Cardiac septum (tissue), 1 donor: ENCODE measurements at regions of chr7 and their contacts with region 1.

Region 1: DNA sequence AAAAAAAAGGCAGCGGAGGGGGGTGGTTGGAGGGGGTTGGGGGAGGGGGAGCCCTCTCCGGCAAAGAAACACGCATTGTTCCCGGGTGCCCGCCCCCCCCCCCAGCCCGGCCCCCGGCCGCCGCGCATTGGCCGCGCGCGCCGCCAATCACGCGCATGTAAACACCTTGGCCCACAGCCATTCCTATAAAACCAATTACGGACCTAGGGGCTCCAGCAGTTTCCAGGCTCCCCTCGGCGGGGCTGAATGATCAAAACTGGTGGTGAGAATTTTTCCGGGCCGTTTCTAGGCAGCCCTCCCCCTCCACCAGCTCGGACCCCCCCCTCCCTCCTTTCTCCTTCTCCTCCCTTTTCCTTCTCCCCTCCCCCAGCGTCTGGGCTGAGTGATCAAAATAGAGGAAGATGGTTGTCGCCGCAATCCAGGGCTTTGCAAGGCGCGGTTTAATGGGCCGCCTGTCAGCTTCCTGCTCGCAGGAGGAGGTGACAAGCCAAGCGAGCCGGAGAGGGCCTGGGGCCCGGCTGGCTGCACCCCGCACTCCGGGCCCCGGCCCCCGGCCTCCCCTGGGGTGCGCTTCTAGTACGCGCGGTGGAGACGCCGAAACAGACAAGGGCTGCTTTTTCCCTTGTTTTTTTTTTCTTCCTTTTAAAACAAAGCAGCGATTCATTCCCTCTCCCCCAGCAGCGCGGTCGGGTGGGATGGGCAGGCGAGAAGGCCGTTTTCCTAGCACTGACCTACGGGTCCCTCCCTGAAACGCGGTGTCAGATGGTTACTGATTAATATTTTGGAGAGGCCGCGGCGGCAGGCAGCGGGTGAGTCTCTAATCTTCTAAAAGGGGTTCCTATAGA is 432 bp upstream of the TNRC18 start:
- DNase-seq: peak; percentile 97

Region 2: GRCh38 chr7:5278766-5279165 is 145.3 kb before region 1 on chr7:
- intact Hi-C with region 1: no loop called
- DNase-seq: no peak

Region 3: GRCh38 chr7:5694912-5695726 is 271.1 kb after region 1 on chr7:
- intact Hi-C with region 1: loop called (anchors 2 kb)
- DNase-seq: no peak